Naive thymus-derived CD4-positive, alpha-beta T cell (primary cell): ENCODE measurements at regions of chr17 and their contacts with region 1.

Region 1: GRCh38 chr17:11997147-11997846 is at the start of gene ZNF18:
- DNase-seq: peak; percentile 90 to 97 (median 94)
- ATAC-seq: peak; percentile 100
- H3K4me3 ChIP-seq: peak within 1 kb of the TSS; percentile 92
- H3K4me3 Mint-ChIP-seq: peak within 1 kb of the TSS; percentile 93 to 99 (median 98)
- H3K27ac ChIP-seq: peak within 1 kb of the TSS; percentile 90
- H3K27ac Mint-ChIP-seq: peak within 1 kb of the TSS; percentile 89 to 99 (median 97)
- H3K4me1 ChIP-seq: peaks cover 4 to 5% of the 10 kb centered on the region in 2 donors
- H3K4me1 Mint-ChIP-seq: peaks cover 14 to 35% (median 26%) of the 10 kb centered on the region in 7 donors
- H3K27me3 ChIP-seq: no peaks in the 10 kb centered on the region
- H3K27me3 Mint-ChIP-seq: peaks cover 0 to 6% (median 0%) of the 10 kb centered on the region in 5 donors
- total RNA-seq, gene ZNF18: 10.4 to 13.9 (median 11.3) TPM

Region 2: DNA sequence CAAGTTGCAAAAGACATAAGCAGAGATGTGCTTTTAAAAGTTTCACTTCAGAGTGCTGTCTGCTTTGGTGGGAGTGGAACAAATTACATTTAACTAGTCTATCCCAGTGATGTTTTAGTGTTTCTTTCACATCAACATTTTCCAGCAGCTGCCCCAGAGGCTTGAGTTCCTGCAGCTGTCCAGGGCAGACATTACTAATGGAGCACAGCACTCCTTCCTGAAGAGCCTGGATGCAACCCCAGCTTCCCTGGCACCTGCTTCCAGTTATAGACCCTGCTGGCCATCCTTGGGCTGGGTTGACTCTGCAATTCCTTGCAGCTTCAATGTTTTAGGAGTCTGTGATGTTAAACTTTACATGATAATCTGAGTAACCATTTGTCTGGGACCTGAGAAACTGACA is 1098.0 kb before region 1 on chr17:
- CTCF ChIA-PET with region 1: no interaction called
- POLR2A ChIA-PET with region 1: no interaction called
- intact Hi-C with region 1: no loop called
- DNase-seq: no peak
- ATAC-seq: no peak
- H3K4me3 ChIP-seq: no peak overlapping the region
- H3K4me3 Mint-ChIP-seq: no peak overlapping the region
- H3K27ac ChIP-seq: no peak overlapping the region
- H3K27ac Mint-ChIP-seq: no peak overlapping the region
- H3K4me1 ChIP-seq: no peaks in the 10 kb centered on the region
- H3K4me1 Mint-ChIP-seq: no peaks in the 10 kb centered on the region
- H3K27me3 ChIP-seq: no peaks in the 10 kb centered on the region
- H3K27me3 Mint-ChIP-seq: peaks cover 0 to 8% (median 0%) of the 10 kb centered on the region in 5 donors

Region 3: DNA sequence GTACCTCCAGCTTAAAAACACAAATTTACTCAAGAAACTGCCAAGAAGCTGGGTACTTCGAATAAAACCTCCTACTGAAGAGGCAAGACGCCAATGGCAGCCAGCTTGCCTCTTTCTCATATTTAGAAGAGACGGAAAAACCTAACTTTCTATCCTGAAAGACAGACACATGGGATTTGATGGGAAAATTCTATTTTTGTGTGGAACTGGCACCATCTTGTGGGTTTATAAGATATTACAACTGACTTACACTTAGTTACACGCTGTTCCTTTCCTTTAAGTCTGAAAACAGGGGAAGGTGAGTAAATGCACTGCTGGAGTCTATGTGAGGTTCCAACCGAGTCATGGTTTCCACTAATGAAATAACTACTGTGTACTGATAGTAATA is 10.4 kb before region 1 on chr17:
- CTCF ChIA-PET with region 1: interaction called, 4 read pairs
- POLR2A ChIA-PET with region 1: interaction called, 12 read pairs
- intact Hi-C with region 1: no loop called
- DNase-seq: no peak
- ATAC-seq: no peak
- H3K4me3 ChIP-seq: no peak overlapping the region
- H3K4me3 Mint-ChIP-seq: no peak overlapping the region
- H3K27ac ChIP-seq: no peak overlapping the region
- H3K27ac Mint-ChIP-seq: no peak overlapping the region
- H3K4me1 ChIP-seq: no peaks in the 10 kb centered on the region
- H3K4me1 Mint-ChIP-seq: peaks cover 5 to 42% (median 24%) of the 10 kb centered on the region in 7 donors
- H3K27me3 ChIP-seq: no peaks in the 10 kb centered on the region
- H3K27me3 Mint-ChIP-seq: no peaks in the 10 kb centered on the region

Region 4: DNA sequence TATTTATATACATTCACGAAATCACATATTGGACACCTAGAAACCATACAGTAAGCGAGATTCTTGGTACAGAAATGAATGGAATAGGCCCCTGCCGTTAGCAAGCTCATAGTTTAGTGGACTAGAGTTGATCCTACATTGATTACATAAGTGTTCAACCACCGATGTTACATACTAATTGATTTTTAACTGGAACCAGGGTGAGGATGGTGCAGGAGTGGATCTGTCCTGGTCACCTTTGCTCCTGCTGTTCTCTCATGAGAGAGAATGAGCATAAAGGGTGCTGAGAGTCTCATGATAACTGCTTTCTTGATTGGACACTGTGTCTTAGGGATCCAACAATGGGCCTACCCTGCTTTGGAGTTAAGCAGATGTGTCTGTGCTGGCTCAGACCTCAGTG is 37.2 kb after region 1 on chr17:
- CTCF ChIA-PET with region 1: no interaction called
- POLR2A ChIA-PET with region 1: interaction called, 8 read pairs
- intact Hi-C with region 1: loop called in 1 of 2 experiments (anchors 5 kb)
- DNase-seq: no peak
- ATAC-seq: no peak
- H3K4me3 ChIP-seq: no peak overlapping the region
- H3K4me3 Mint-ChIP-seq: peak overlapping the region in 1 of 10 donors; percentile 30
- H3K27ac ChIP-seq: no peak overlapping the region
- H3K27ac Mint-ChIP-seq: no peak overlapping the region
- H3K4me1 ChIP-seq: no peaks in the 10 kb centered on the region
- H3K4me1 Mint-ChIP-seq: peaks cover 10 to 76% (median 59%) of the 10 kb centered on the region in 7 donors
- H3K27me3 ChIP-seq: no peaks in the 10 kb centered on the region
- H3K27me3 Mint-ChIP-seq: no peaks in the 10 kb centered on the region

Region 5: GRCh38 chr17:12122075-12122474 is 124.8 kb after region 1 on chr17:
- CTCF ChIA-PET with region 1: no interaction called
- POLR2A ChIA-PET with region 1: no interaction called
- intact Hi-C with region 1: loop called in 1 of 2 experiments (anchors 10 kb)
- DNase-seq: no peak
- ATAC-seq: no peak
- H3K4me3 ChIP-seq: no peak overlapping the region
- H3K4me3 Mint-ChIP-seq: no peak overlapping the region
- H3K27ac ChIP-seq: no peak overlapping the region
- H3K27ac Mint-ChIP-seq: no peak overlapping the region
- H3K4me1 ChIP-seq: no peaks in the 10 kb centered on the region
- H3K4me1 Mint-ChIP-seq: peaks cover 0 to 7% (median 0%) of the 10 kb centered on the region in 7 donors
- H3K27me3 ChIP-seq: no peaks in the 10 kb centered on the region
- H3K27me3 Mint-ChIP-seq: no peaks in the 10 kb centered on the region